HEK293 (cell line): ENCODE measurements at regions of chr12 and their contacts with region 1.

Region 1: DNA sequence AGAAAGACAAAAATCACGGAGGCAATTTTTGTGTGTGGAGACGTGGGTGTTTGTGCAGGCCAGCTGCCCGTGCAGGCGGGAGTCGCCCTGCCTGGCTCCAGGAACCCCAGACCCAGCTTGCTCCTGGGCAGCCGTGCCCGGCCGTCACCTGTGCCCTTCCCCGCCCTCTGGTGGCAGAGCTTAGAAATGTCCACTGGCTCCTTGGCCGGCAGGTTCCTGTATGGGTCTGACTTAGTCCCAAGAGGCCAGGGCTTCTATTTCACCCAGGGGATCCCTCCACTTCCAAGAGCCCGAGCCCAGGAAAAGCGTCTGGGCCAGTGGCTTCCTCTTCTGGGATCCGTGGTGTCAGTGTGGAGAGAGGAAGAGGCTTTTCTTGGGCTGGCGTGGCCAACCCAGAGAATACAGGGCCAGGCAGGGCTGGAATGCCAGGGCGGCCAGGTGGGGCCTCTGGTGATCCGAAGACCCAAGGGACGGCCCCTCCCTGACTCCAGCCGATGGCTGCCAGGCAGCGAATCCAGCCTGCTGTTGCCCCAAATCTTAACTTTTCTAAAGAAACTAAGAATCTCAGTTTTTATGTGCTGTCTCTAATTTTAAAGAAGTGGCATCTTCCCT is 120.9 kb downstream of the TMEM132C start:
- H3K4me3 ChIP-seq: no peak overlapping the region
- H3K27ac ChIP-seq: no peak overlapping the region
- H3K4me1 ChIP-seq: no peaks in the 10 kb centered on the region
- CTCF ChIP-seq: peak; percentile 26; the same call in 1 of the 2 replicates

Region 2: DNA sequence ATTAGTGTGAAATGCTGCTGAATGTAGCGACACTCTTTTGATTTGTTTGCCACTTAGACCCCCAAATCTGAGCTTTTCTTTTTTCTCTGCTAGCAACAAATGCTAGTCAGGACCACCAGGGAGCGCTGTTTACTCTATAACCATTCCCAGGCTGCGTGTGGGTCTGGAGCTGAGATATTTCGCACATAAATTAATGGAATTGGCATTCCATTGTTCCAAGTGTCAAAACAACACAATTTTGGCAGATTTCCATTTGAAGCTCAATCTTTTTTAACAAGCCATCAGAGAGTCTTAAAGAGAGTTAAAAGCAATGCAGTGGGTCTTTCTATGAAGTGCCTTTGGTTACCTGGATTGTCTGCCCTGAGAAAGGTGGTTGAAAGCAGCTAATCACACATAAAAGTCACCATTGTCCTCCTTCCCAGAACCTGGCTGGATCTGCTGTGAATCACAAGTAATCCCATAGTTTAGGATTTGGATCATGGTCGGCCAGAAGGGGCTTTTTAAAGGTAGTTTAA is 128.3 kb before region 1 on chr12:
- CTCF ChIA-PET with region 1: interaction called, 21 read pairs
- POLR2A ChIA-PET with region 1: no interaction called
- H3K4me3 ChIP-seq: no peak overlapping the region
- H3K27ac ChIP-seq: no peak overlapping the region
- H3K4me1 ChIP-seq: no peaks in the 10 kb centered on the region
- CTCF ChIP-seq: no peak

Region 3: GRCh38 chr12:128531170-128531569 is 143.3 kb after region 1 on chr12:
- CTCF ChIA-PET with region 1: no interaction called
- POLR2A ChIA-PET with region 1: no interaction called
- H3K4me3 ChIP-seq: no peak overlapping the region
- H3K27ac ChIP-seq: no peak overlapping the region
- H3K4me1 ChIP-seq: no peaks in the 10 kb centered on the region
- CTCF ChIP-seq: no peak